Ascending aorta (tissue), 2 donors: ENCODE measurements at regions of chr4 and their contacts with region 1.

Region 1: GRCh38 chr4:1192091-1192492 is 19.7 kb upstream of the SPON2 start:
- DNase-seq: peak; percentile 76 to 94
- H3K4me3 ChIP-seq: peak overlapping the region in 1 of 2 donors; percentile 25
- H3K27ac ChIP-seq: peak overlapping the region; percentile 79 to 87
- H3K4me1 ChIP-seq: peaks cover 18 to 23% of the 10 kb centered on the region in 2 donors
- H3K27me3 ChIP-seq: no peaks in the 10 kb centered on the region
- CTCF ChIP-seq: no peak

Region 2: GRCh38 chr4:1154523-1155182 is 37.4 kb before region 1 on chr4:
- intact Hi-C with region 1: loop called (anchors 2 kb)
- DNase-seq: peak; percentile 67 to 93
- H3K4me3 ChIP-seq: peak overlapping the region in 1 of 2 donors; percentile 48
- H3K27ac ChIP-seq: peak overlapping the region; percentile 77 to 79
- H3K4me1 ChIP-seq: peaks cover 9 to 12% of the 10 kb centered on the region in 2 donors
- H3K27me3 ChIP-seq: no peaks in the 10 kb centered on the region
- CTCF ChIP-seq: no peak

Region 3: GRCh38 chr4:1207603-1208265 is 15.6 kb after region 1 on chr4:
- intact Hi-C with region 1: loop called (anchors 2 kb)
- DNase-seq: peak in 1 of 2 donors; percentile 67
- H3K4me3 ChIP-seq: no peak overlapping the region
- H3K27ac ChIP-seq: no peak overlapping the region
- H3K4me1 ChIP-seq: peaks cover 25 to 31% of the 10 kb centered on the region in 2 donors
- H3K27me3 ChIP-seq: no peaks in the 10 kb centered on the region
- CTCF ChIP-seq: no peak